CD4-positive, alpha-beta memory T cell (primary cell): ENCODE measurements at regions of chr1 and their contacts with region 1.

Region 1: GRCh38 chr1:234599617-234600417 is 10.2 kb downstream of the IRF2BP2 start:
- DNase-seq: peak; percentile 81 to 95 (median 84)
- H3K4me3 ChIP-seq: peak overlapping the region; percentile 17 to 46
- H3K4me3 Mint-ChIP-seq: peak overlapping the region; percentile 84 to 95 (median 88)
- H3K27ac ChIP-seq: peak overlapping the region; percentile 96
- H3K27ac Mint-ChIP-seq: peak overlapping the region; percentile 92 to 99 (median 97)
- H3K4me1 ChIP-seq: peaks cover 56% of the 10 kb centered on the region
- H3K4me1 Mint-ChIP-seq: peaks cover 37 to 64% (median 48%) of the 10 kb centered on the region in 4 donors
- H3K27me3 ChIP-seq: no peaks in the 10 kb centered on the region
- H3K27me3 Mint-ChIP-seq: no peaks in the 10 kb centered on the region

Region 2: DNA sequence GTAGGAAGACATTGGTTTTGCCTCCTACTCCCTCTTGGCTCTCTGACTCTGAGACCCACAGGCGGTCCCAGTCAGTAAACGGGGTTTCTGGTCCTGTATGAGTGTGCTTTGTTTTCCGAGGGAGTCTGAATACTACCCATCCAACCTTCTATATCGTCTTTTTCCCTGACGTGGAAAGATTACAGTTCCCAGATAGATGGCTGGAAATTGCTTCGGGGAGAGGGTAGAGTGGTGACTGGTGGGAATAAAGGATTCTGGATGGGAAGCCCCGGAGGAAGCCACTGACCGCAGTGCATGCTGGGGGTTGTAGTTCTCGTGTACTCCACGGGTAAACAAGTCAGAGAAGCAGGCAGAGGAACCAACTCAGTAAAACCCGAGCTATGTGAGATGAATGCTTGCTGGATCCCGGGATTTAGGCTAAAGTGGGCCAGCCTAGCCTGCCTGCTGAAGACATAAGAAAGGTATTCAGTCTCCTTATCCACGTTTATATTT is 76.3 kb after region 1 on chr1:
- CTCF ChIA-PET with region 1: no interaction called
- POLR2A ChIA-PET with region 1: no interaction called
- intact Hi-C with region 1: loop called (anchors 2 kb)
- DNase-seq: peak; percentile 38 to 56 (median 40)
- H3K4me3 ChIP-seq: peak overlapping the region in 1 of 2 donors; percentile 31
- H3K4me3 Mint-ChIP-seq: peak overlapping the region; percentile 74 to 85 (median 80)
- H3K27ac ChIP-seq: no peak overlapping the region
- H3K27ac Mint-ChIP-seq: peak overlapping the region in 5 of 7 donors; percentile 48 to 87 (median 68)
- H3K4me1 ChIP-seq: peaks cover 7% of the 10 kb centered on the region
- H3K4me1 Mint-ChIP-seq: peaks cover 8 to 12% (median 9%) of the 10 kb centered on the region in 4 donors
- H3K27me3 ChIP-seq: no peaks in the 10 kb centered on the region
- H3K27me3 Mint-ChIP-seq: no peaks in the 10 kb centered on the region

Region 3: GRCh38 chr1:234730770-234731568 is 131.2 kb after region 1 on chr1:
- CTCF ChIA-PET with region 1: interaction called, 18 read pairs
- POLR2A ChIA-PET with region 1: interaction called, 146 read pairs
- intact Hi-C with region 1: no loop called
- DNase-seq: peak; percentile 78 to 87 (median 79)
- H3K4me3 ChIP-seq: no peak overlapping the region
- H3K4me3 Mint-ChIP-seq: peak overlapping the region; percentile 21 to 73 (median 62)
- H3K27ac ChIP-seq: peak overlapping the region; percentile 60
- H3K27ac Mint-ChIP-seq: peak overlapping the region; percentile 86 to 98 (median 93)
- H3K4me1 ChIP-seq: peaks cover 70% of the 10 kb centered on the region
- H3K4me1 Mint-ChIP-seq: peaks cover 30 to 69% (median 57%) of the 10 kb centered on the region in 4 donors
- H3K27me3 ChIP-seq: no peaks in the 10 kb centered on the region
- H3K27me3 Mint-ChIP-seq: no peaks in the 10 kb centered on the region

Region 4: GRCh38 chr1:234778221-234779159 is 178.7 kb after region 1 on chr1:
- CTCF ChIA-PET with region 1: no interaction called
- POLR2A ChIA-PET with region 1: no interaction called
- intact Hi-C with region 1: no loop called
- DNase-seq: no peak
- H3K4me3 ChIP-seq: no peak overlapping the region
- H3K4me3 Mint-ChIP-seq: no peak overlapping the region
- H3K27ac ChIP-seq: no peak overlapping the region
- H3K27ac Mint-ChIP-seq: no peak overlapping the region
- H3K4me1 ChIP-seq: peaks cover 9% of the 10 kb centered on the region
- H3K4me1 Mint-ChIP-seq: peaks cover 0 to 3% (median 0%) of the 10 kb centered on the region in 4 donors
- H3K27me3 ChIP-seq: peaks cover 31% of the 10 kb centered on the region
- H3K27me3 Mint-ChIP-seq: no peaks in the 10 kb centered on the region

Region 5: GRCh38 chr1:234862944-234863515 is 263.2 kb after region 1 on chr1:
- CTCF ChIA-PET with region 1: no interaction called
- POLR2A ChIA-PET with region 1: interaction called, 3 read pairs
- intact Hi-C with region 1: loop called (anchors 5 kb)
- DNase-seq: no peak
- H3K4me3 ChIP-seq: no peak overlapping the region
- H3K4me3 Mint-ChIP-seq: no peak overlapping the region
- H3K27ac ChIP-seq: no peak overlapping the region
- H3K27ac Mint-ChIP-seq: no peak overlapping the region
- H3K4me1 ChIP-seq: peaks cover 6% of the 10 kb centered on the region
- H3K4me1 Mint-ChIP-seq: peaks cover 5 to 14% (median 10%) of the 10 kb centered on the region in 4 donors
- H3K27me3 ChIP-seq: no peaks in the 10 kb centered on the region
- H3K27me3 Mint-ChIP-seq: no peaks in the 10 kb centered on the region

Region 6: GRCh38 chr1:234963180-234963903 is 363.5 kb after region 1 on chr1:
- CTCF ChIA-PET with region 1: interaction called, 4 read pairs
- POLR2A ChIA-PET with region 1: interaction called, 16 read pairs
- intact Hi-C with region 1: loop called (anchors 1 kb)
- DNase-seq: peak; percentile 85 to 94 (median 86)
- H3K4me3 ChIP-seq: peak overlapping the region; percentile 14 to 46
- H3K4me3 Mint-ChIP-seq: peak overlapping the region; percentile 41 to 89 (median 84)
- H3K27ac ChIP-seq: peak overlapping the region; percentile 89
- H3K27ac Mint-ChIP-seq: peak overlapping the region; percentile 90 to 98 (median 96)
- H3K4me1 ChIP-seq: peaks cover 72% of the 10 kb centered on the region
- H3K4me1 Mint-ChIP-seq: peaks cover 58 to 76% (median 64%) of the 10 kb centered on the region in 4 donors
- H3K27me3 ChIP-seq: no peaks in the 10 kb centered on the region
- H3K27me3 Mint-ChIP-seq: no peaks in the 10 kb centered on the region

Region 7: GRCh38 chr1:235093696-235094592 is 494.1 kb after region 1 on chr1:
- CTCF ChIA-PET with region 1: interaction called, 19 read pairs
- POLR2A ChIA-PET with region 1: no interaction called
- intact Hi-C with region 1: no loop called
- DNase-seq: peak; percentile 77 to 80 (median 79)
- H3K4me3 ChIP-seq: no peak overlapping the region
- H3K4me3 Mint-ChIP-seq: peak overlapping the region in 1 of 8 donors; percentile 39
- H3K27ac ChIP-seq: no peak overlapping the region
- H3K27ac Mint-ChIP-seq: peak overlapping the region in 3 of 7 donors; percentile 14 to 71 (median 29)
- H3K4me1 ChIP-seq: peaks cover 9% of the 10 kb centered on the region
- H3K4me1 Mint-ChIP-seq: peaks cover 6 to 10% (median 7%) of the 10 kb centered on the region in 4 donors
- H3K27me3 ChIP-seq: no peaks in the 10 kb centered on the region
- H3K27me3 Mint-ChIP-seq: peaks cover 0 to 5% of the 10 kb centered on the region in 2 donors